GM23248 (cell line): ENCODE measurements at regions of chrX and their contacts with region 1.

Region 1: DNA sequence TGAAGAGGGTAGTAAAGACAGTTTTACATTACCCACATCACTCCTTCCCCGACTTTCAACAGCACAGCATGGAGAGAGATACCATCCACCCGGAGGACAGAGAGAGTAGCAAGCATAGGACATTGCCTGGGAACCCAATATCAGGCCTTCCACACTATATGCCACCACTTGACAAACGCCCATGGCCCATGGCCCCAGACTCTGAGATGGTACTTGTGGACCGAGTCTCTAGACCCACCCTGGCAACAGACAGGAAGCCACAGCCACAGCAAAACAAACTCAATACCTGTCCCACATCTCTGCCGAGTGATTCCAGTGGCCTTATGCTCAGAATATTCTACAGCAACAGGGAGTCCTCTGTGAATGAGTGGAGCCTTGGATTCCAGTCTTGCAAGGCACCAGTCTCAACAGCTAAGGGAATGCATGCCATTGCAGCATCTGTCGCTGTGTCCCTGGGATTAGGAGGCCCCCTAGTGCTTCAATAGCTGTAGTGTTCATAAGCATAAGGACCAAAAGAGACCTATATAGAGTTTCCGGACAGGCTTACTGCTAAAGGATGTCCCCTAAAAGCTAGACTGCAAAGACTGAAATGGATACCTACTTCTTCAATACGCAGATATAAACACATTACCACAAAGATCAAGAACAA is 14.7 kb upstream of the CT55 start:
- DNase-seq: peak; percentile 58
- H3K4me3 ChIP-seq: no peak overlapping the region
- H3K27ac ChIP-seq: no peak overlapping the region
- H3K4me1 ChIP-seq: no peaks in the 10 kb centered on the region
- H3K27me3 ChIP-seq: no peaks in the 10 kb centered on the region

Region 2: GRCh38 chrX:134969726-134970125 is 216.2 kb before region 1 on chrX:
- in situ Hi-C with region 1: loop called (anchors 25 kb)
- DNase-seq: peak; percentile 57
- H3K4me3 ChIP-seq: no peak overlapping the region
- H3K27ac ChIP-seq: peak overlapping the region; percentile 6; the same call in 1 of the 2 replicates
- H3K4me1 ChIP-seq: no peaks in the 10 kb centered on the region; the same call in 1 of the 2 replicates
- H3K27me3 ChIP-seq: no peaks in the 10 kb centered on the region

Region 3: GRCh38 chrX:135484641-135485289 is 298.8 kb after region 1 on chrX:
- in situ Hi-C with region 1: no loop called
- DNase-seq: peak; percentile 63
- H3K4me3 ChIP-seq: no peak overlapping the region
- H3K27ac ChIP-seq: no peak overlapping the region
- H3K4me1 ChIP-seq: no peaks in the 10 kb centered on the region
- H3K27me3 ChIP-seq: no peaks in the 10 kb centered on the region

Region 4: DNA sequence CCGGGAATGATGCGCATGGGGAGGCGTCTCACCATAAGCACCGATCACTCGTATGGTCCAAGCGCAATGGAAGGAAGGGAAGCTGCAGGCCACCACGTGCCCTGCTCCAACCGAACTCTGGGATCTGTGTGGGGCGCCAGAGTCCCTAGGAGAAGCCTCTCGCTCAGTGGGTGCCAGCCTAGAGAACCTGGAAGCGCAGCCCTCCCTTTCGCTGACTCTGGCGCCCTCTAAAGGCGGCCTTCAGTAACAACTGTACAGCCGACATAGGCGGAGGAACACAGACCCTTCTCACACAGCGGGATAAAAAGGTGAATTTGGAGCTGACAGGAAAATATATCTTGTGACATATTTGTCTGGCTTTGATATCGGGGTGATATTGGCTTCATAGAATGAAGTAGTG is 410.6 kb after region 1 on chrX:
- in situ Hi-C with region 1: loop called (anchors 25 kb)
- DNase-seq: peak; percentile 59
- H3K4me3 ChIP-seq: no peak overlapping the region
- H3K27ac ChIP-seq: no peak overlapping the region
- H3K4me1 ChIP-seq: no peaks in the 10 kb centered on the region
- H3K27me3 ChIP-seq: no peaks in the 10 kb centered on the region